Activated CD4-positive, alpha-beta memory T cell treated with anti-CD3 and anti-CD28 coated beads, Interleukin-2, amount 10 ng/mL, durations not matched to agents 7 days and 5 days (primary cell): ENCODE measurements at regions of chr17 and their contacts with region 1.

Region 1: DNA sequence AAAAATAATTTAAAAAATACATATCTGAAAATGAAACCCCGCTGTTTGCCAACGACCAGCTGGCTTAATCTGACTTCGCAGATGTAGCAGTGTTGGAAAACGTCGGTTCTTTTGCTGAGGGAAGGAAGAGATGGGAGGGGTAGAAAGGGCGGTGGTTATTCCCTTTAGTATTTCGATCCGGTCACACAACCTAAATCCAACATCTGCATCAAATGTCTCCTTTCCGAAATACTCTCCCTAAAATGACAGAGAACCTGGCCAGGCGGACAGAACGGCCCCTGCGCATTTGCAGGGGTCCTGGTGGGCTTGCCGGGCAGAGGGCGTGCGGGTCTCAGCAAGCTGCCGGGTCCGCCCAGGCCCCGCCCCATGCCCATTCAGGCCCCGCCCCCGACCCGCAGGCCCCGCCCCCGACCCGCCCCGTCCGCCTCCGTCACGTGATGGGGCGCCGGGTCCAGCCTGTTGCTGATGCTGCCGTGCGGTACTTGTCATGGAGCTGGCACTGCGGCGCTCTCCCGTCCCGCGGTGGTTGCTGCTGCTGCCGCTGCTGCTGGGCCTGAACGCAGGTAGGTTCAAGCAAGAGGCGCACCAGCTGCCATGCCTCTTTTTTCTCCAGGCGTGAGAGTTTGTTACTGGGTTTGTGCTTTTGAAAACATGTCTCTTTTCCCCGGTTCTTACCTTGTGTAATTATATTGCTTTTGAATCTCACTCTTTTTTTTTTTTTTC is at the start of gene SCPEP1:
- DNase-seq: peak; percentile 86
- H3K4me3 Mint-ChIP-seq: peak within 1 kb of the TSS; percentile 85
- H3K27ac Mint-ChIP-seq: peak within 1 kb of the TSS; percentile 80
- H3K4me1 Mint-ChIP-seq: peaks cover 25% of the 10 kb centered on the region
- H3K27me3 Mint-ChIP-seq: peaks cover 19% of the 10 kb centered on the region
- total RNA-seq, gene SCPEP1: 25.0 to 27.1 TPM

Region 2: GRCh38 chr17:56960596-56961538 is 17.0 kb before region 1 on chr17 and contains the start of gene COIL:
- CTCF ChIA-PET with region 1: interaction called, 3 read pairs
- POLR2A ChIA-PET with region 1: interaction called, 15 read pairs
- DNase-seq: peak; percentile 93
- H3K4me3 Mint-ChIP-seq: peak within 1 kb of the TSS; percentile 79
- H3K27ac Mint-ChIP-seq: peak within 1 kb of the TSS; percentile 77
- H3K4me1 Mint-ChIP-seq: peaks cover 28% of the 10 kb centered on the region
- H3K27me3 Mint-ChIP-seq: peaks cover 4% of the 10 kb centered on the region
- total RNA-seq, gene COIL: 16.2 to 17.2 TPM

Region 3: DNA sequence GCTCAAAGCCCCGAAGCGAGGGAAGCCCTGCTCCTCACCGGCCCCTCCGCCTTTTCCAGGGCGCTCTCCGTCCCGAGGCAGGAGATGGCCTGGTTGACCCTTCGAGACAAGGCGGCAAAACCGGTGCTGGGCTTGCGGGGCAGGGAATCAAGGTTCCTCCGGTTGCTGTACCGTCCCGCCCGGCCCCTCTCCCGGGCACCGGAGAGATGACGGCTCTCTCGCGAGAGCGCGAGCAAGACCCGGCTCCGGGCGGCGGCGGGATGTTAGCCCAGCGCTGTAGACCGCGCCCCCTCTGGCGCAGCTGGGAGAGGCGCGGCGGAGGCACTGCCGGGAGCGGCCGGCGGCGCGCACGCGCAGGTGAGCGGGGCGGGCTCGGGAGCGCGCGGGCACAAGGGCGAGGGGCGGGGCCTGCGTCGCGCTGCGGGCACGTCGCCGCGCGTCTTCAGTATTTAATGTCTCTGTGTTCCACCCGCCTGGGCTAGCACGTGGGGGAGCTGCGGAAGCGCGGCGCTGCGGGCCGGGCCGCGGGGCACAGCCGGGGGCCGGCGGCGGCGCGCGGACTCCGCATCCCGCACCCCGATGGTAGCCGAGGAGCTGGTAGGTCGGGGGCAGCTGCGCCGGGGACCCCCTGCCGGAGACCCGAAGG is 107.1 kb after region 1 on chr17 and contains the start of gene AKAP1:
- CTCF ChIA-PET with region 1: no interaction called
- POLR2A ChIA-PET with region 1: interaction called, 13 read pairs
- DNase-seq: peak; percentile 97
- H3K4me3 Mint-ChIP-seq: peak within 1 kb of the TSS; percentile 86
- H3K27ac Mint-ChIP-seq: peak within 1 kb of the TSS; percentile 87
- H3K4me1 Mint-ChIP-seq: peaks cover 46% of the 10 kb centered on the region
- H3K27me3 Mint-ChIP-seq: peaks cover 6% of the 10 kb centered on the region
- total RNA-seq, gene AKAP1: 19.9 to 22.4 TPM